Posterior vena cava (tissue), 2 donors: ENCODE measurements at regions of chr15 and their contacts with region 1.

Region 1: GRCh38 chr15:64809649-64810496 is 15.6 kb downstream of the PIF1 start:
- DNase-seq: peak; percentile 94

Region 2: GRCh38 chr15:64686216-64686631 is 123.6 kb before region 1 on chr15:
- intact Hi-C with region 1: loop called in 1 of 2 experiments (anchors 5 kb)
- DNase-seq: no peak

Region 3: DNA sequence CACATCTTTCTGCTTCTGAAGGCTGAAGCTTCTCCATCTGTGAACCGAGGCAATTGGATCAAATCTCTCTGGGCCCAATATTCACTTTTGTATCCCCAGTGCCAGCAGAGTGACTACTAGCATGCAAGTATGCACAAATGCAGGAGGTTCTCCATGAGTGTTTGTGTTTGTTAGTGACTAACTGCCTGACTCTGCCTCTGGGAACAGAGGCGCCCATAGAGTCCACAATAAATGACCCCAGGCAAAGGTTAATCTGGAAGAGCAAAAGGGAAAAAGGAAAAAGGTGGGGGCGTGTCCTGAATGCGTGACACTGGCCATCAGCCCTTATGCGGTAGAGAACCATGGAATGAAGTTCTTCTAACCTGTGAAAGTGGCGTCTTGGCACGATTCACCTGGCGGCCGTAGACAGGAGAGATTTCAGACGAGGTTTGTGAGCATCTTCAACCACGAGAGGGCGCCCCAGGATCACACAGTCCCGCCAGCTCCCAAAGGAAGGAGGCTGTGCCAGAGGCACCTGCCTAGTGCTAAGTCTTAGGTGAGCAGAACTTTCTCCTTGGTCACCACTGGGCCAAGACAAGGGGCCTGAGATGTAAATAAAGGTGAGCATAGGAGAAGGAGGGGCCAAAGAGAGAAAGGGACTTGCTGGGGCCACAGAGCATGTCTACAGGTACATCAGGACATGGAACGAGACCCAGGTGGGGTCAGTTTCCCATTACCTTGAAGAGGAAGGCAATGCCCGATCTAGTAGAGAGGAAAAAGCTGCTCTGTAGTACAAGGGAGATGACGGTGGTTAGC is 78.7 kb before region 1 on chr15:
- intact Hi-C with region 1: loop called (anchors 2 to 5 kb)
- DNase-seq: peak; percentile 94

Region 4: GRCh38 chr15:64740311-64741170 is 69.3 kb before region 1 on chr15:
- intact Hi-C with region 1: loop called in 1 of 2 experiments (anchors 5 kb)
- DNase-seq: no peak